CD4-positive, alpha-beta memory T cell (primary cell): ENCODE measurements at regions of chr15 and their contacts with region 1.

Region 1: DNA sequence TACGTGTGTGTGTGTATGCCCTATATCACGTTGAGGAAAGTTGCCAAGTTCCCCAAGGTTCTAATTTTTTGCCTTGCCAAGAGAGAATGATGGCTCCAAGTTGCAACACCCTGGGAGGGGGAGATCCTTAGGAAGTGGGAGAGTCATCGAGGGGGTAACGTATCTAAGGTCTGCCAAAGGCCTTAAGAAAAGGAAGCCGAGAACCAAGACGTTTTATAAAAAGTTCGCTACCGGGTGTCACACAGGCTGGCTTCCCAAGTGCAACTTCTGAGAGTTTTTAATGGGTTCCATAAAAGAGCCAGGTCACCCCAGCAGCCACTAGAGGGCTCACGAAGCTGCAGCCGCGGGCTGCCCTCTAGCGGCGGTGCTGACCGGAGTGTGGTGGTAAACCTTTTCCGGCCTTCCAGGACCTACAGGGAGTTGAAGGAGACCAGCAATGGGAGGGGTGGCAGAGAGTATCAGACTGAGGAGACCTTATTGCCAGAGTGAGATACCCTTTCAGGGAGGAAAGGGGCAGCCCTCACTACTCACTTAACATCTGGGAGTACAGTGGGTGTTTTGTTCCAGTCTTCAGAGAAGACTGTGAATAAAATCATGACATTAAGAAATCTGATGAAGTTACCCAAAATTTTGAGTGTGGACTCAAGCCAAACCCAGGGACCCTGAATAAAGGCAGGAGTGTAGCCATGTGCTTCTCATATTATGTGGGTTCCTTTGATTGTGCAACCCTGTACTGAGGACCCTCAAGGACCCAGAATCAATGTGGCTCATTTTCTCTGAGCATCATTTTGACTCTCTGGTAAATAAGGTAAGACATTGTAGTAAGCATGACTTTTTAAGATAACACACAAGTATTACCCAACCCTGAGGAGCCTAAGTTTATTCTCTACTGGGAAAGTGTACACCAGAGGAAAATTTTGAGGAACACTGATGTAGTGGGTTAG is 2.5 kb upstream of the RFX7 start:
- DNase-seq: peak; percentile 82 to 85 (median 84)
- H3K4me3 ChIP-seq: peak overlapping the region; percentile 19 to 81
- H3K4me3 Mint-ChIP-seq: peak overlapping the region; percentile 84 to 97 (median 90)
- H3K27ac ChIP-seq: peak overlapping the region; percentile 53
- H3K27ac Mint-ChIP-seq: peak overlapping the region; percentile 88 to 97 (median 92)
- H3K4me1 ChIP-seq: peaks cover 35% of the 10 kb centered on the region
- H3K4me1 Mint-ChIP-seq: peaks cover 22 to 39% (median 31%) of the 10 kb centered on the region in 4 donors
- H3K27me3 ChIP-seq: no peaks in the 10 kb centered on the region
- H3K27me3 Mint-ChIP-seq: peaks cover 0 to 2% of the 10 kb centered on the region in 2 donors

Region 2: DNA sequence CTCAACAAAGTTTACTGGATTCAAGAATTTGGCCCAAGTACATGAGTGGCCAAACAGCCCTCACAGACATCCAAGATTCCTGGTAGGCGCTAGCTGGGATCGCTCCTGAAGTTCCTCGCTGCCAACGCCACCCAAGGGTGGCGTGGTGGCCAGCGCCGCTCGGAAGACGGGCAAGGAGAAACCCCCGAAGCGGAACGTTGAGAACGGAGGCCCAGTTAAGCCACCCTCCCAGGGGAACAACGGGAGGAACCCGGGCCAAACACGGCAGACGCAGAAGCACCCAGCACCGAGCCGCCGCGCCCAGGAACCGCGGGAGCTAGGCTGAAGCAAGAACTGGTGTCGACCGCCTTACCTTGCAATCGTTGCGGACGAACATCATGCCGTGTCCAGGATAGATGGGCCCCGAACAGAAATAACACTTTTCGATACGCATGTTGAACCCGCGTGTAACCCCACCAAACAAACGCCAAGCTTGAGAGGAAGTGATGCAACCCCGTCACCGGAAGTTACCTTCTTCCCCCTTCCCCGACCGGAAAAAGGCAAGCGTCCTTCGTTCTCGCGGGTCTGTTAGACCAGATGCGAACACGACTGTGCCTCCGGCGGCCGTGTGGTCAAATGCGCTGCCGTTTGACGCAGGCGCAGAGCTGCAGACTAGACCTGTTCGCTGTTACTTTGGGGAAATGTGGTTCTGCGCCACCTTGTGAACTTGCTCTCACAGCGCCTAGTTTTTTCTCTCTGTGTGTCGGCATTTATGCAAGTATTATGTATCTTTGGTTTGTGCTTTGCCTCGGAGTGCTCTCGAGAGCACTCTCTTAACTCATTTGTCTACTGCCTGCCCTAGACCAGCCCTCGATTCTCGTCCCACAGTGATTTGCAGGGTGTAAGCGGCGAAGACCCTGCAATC is 1049.4 kb before region 1 on chr15 and contains the start of gene RSL24D1:
- CTCF ChIA-PET with region 1: no interaction called
- POLR2A ChIA-PET with region 1: interaction called, 6 read pairs
- intact Hi-C with region 1: loop called (anchors 2 kb)
- DNase-seq: peak; percentile 94 to 98 (median 97)
- H3K4me3 ChIP-seq: peak within 1 kb of the TSS; percentile 90 to 97
- H3K4me3 Mint-ChIP-seq: no peak within 1 kb of the TSS
- H3K27ac ChIP-seq: peak within 1 kb of the TSS; percentile 87
- H3K27ac Mint-ChIP-seq: no peak within 1 kb of the TSS
- H3K4me1 ChIP-seq: peaks cover 40% of the 10 kb centered on the region
- H3K4me1 Mint-ChIP-seq: peaks cover 10 to 17% (median 13%) of the 10 kb centered on the region in 4 donors
- H3K27me3 ChIP-seq: no peaks in the 10 kb centered on the region
- H3K27me3 Mint-ChIP-seq: no peaks in the 10 kb centered on the region
- total RNA-seq, gene RSL24D1: 103 to 107 TPM

Region 3: DNA sequence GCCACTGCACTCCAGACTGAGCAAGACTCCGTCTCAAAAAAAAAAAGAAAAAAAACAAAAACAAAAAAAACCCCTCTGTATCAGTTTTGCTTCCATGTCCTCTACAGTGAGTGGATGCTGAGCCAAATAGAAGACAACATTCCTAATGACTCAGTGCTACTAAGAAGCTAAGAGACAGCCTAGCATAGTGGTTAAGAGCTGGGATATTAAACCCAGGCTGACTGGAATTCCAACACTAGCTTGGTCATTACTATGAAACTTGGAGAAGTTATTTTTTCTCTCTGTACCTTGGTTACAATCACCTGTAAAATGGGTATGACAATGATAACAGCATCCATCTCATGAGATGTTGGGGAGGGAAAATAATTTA is 597.1 kb before region 1 on chr15:
- CTCF ChIA-PET with region 1: interaction called, 7 read pairs
- POLR2A ChIA-PET with region 1: no interaction called
- intact Hi-C with region 1: loop called (anchors 1 kb)
- DNase-seq: no peak
- H3K4me3 ChIP-seq: no peak overlapping the region
- H3K4me3 Mint-ChIP-seq: no peak overlapping the region
- H3K27ac ChIP-seq: no peak overlapping the region
- H3K27ac Mint-ChIP-seq: no peak overlapping the region
- H3K4me1 ChIP-seq: no peaks in the 10 kb centered on the region
- H3K4me1 Mint-ChIP-seq: no peaks in the 10 kb centered on the region
- H3K27me3 ChIP-seq: no peaks in the 10 kb centered on the region
- H3K27me3 Mint-ChIP-seq: no peaks in the 10 kb centered on the region

Region 4: DNA sequence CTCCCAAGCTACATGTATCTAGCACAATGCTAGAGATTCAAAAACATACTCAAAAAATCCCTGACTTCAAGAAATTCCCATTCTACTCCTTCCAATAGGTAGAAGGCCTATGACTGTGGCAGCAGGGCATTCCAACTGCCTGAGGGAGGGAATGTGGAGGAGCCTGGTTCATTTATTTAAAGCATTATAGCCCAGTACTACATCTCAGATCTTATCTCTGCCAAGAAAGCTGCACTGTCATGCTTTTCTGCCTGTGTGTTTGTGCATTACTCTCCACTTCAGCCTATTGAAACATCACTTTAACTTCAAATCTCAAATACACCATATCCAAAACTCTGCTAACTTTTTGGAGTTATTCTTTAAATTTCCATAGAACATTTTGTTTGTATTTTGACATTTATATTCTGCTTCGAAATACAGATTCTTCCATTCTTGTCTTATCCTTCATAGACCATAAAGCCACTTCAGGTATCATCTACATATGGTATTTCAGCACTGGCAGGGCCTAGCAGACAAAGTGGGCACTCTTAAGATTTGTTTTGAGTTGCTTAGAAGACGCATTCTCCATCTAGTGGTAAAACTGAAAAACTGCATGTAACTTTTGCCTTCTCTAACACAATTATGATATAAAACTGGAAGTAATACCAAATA is 193.6 kb before region 1 on chr15:
- CTCF ChIA-PET with region 1: interaction called, 19 read pairs
- POLR2A ChIA-PET with region 1: interaction called, 3 read pairs
- intact Hi-C with region 1: loop called (anchors 2 kb)
- DNase-seq: peak in 4 of 5 donors; percentile 44 to 59 (median 47)
- H3K4me3 ChIP-seq: no peak overlapping the region
- H3K4me3 Mint-ChIP-seq: no peak overlapping the region
- H3K27ac ChIP-seq: no peak overlapping the region
- H3K27ac Mint-ChIP-seq: peak overlapping the region in 2 of 7 donors; percentile 31 to 36
- H3K4me1 ChIP-seq: no peaks in the 10 kb centered on the region
- H3K4me1 Mint-ChIP-seq: peaks cover 0 to 5% (median 3%) of the 10 kb centered on the region in 4 donors
- H3K27me3 ChIP-seq: no peaks in the 10 kb centered on the region
- H3K27me3 Mint-ChIP-seq: no peaks in the 10 kb centered on the region

Region 5: DNA sequence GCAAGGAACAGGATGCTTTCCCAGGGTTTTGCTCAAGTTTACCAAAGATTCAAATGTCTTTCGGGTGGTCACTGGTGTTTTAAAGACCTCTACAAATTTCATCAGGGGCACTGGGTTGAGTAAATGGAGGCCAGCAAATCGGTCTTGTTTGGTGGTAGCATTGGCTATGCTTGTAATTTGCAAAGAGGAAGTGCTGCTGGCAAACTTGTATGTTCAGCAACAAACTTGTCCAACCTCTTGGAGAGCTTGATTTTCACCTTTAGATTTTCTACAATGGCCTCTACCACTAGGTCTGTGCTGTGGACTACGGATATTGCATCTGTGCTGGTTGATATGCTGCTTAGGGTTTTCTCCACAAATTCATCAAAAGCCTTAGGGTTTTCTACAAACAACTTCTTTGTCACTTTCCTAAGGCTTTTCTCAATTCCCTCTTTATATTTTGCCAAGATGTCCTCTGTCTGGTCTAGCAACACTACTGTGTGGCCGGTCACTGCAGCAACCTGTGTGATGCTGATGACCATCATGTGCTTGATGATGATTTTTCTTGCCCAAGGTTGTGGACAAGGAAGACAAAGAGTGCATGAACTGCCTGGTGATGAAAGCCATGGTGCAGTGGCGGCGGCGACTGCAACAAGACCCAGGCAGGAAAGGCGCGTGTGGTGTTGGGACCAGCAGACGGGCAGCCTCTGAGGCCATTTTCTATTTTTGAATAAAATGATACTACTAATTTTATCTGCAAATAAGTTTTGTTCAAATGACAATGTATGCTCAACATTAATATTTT is 53.3 kb before region 1 on chr15:
- CTCF ChIA-PET with region 1: no interaction called
- POLR2A ChIA-PET with region 1: interaction called, 5 read pairs
- intact Hi-C with region 1: loop called (anchors 5 kb)
- DNase-seq: no peak
- H3K4me3 ChIP-seq: no peak overlapping the region
- H3K4me3 Mint-ChIP-seq: no peak overlapping the region
- H3K27ac ChIP-seq: no peak overlapping the region
- H3K27ac Mint-ChIP-seq: peak overlapping the region in 1 of 7 donors; percentile 48
- H3K4me1 ChIP-seq: peaks cover 10% of the 10 kb centered on the region
- H3K4me1 Mint-ChIP-seq: peaks cover 27 to 47% (median 39%) of the 10 kb centered on the region in 4 donors
- H3K27me3 ChIP-seq: no peaks in the 10 kb centered on the region
- H3K27me3 Mint-ChIP-seq: no peaks in the 10 kb centered on the region

Region 6: DNA sequence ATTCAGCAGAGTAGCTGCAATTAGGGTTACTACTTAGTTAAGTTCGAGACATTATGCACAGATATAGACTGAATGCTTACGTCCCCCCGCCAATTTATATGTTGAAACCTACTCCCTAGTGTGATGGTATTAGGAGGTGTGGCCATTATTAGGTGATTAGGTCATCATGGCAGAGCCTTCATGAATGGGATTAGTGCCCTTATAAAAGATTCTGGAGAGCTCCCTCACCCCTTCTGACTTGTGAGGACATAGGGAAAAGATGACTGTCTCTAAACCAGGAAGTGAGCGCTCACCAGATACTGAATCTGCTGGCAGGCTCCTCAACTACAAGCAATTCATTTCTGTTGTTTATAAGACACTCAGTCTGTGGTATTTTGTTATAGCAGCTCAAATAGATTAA is 93.5 kb after region 1 on chr15:
- CTCF ChIA-PET with region 1: no interaction called
- POLR2A ChIA-PET with region 1: no interaction called
- intact Hi-C with region 1: no loop called
- DNase-seq: no peak
- H3K4me3 ChIP-seq: no peak overlapping the region
- H3K4me3 Mint-ChIP-seq: no peak overlapping the region
- H3K27ac ChIP-seq: no peak overlapping the region
- H3K27ac Mint-ChIP-seq: no peak overlapping the region
- H3K4me1 ChIP-seq: no peaks in the 10 kb centered on the region
- H3K4me1 Mint-ChIP-seq: no peaks in the 10 kb centered on the region
- H3K27me3 ChIP-seq: no peaks in the 10 kb centered on the region
- H3K27me3 Mint-ChIP-seq: peaks cover 1 to 8% of the 10 kb centered on the region in 2 donors

Region 7: DNA sequence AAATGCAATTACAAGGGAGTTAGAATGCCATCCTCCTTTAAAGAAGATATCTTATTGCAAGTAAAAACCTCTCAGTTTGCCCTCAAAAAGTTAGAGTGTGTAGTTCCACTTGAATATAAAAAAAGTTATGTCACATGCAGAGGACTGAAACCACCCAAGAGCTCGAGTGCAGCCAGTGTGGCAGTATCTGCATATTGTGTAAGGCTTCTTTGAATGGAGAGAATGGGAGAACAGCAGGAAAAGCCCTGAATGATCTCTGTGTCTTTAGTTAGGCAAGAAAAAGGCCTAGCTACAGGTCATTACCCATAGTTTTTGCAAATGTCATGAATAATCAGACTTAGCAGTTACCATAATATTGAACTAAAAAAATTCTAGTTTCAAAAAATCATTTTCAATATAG is 105.2 kb after region 1 on chr15:
- CTCF ChIA-PET with region 1: no interaction called
- POLR2A ChIA-PET with region 1: no interaction called
- intact Hi-C with region 1: no loop called
- DNase-seq: no peak
- H3K4me3 ChIP-seq: no peak overlapping the region
- H3K4me3 Mint-ChIP-seq: no peak overlapping the region
- H3K27ac ChIP-seq: no peak overlapping the region
- H3K27ac Mint-ChIP-seq: no peak overlapping the region
- H3K4me1 ChIP-seq: no peaks in the 10 kb centered on the region
- H3K4me1 Mint-ChIP-seq: no peaks in the 10 kb centered on the region
- H3K27me3 ChIP-seq: no peaks in the 10 kb centered on the region
- H3K27me3 Mint-ChIP-seq: no peaks in the 10 kb centered on the region

Region 8: DNA sequence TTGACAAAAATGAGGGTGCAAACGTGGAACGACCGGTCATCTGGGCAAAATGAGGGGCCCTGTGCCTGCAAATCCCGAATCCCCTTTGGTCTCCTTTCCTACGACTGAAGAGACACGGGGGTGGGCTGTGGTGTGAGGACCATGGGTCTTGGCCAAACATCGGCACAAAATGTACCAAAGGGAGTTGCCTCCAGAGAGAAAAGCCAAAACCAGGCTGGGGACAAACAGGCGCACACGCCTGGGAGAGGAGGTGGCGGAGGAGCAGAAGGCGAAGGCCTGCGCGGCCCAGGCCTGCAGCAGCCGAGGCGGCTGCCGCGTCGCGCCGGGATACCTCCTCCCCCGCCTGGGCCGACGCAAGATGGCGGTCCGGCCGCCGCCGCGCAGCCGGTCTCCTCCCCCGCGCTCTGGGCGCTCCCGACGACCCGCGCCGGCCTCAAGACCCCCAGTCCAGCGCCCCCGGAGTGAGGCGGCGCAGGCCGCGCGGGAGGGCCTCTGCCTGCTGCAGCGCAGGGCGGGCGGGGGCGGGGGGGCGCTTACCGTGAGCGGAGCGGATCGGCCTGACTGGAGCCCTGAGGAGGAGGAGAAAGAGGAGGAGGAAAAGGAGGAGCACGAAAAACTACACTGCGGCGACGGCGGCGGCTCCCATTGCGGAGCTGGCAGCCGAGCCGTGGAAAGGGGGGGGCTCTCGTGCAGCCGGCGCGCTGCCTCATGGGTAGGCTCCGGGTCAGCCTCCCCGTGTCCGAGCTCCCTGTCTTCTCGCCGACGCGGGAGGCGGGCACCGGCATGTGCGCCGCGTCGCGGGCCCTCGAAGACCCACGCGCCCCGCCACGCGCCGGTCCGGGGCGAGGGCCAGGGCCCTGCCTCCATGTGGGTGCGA is 487.0 kb after region 1 on chr15 and contains the start of gene ZNF280D:
- CTCF ChIA-PET with region 1: no interaction called
- POLR2A ChIA-PET with region 1: interaction called, 3 read pairs
- intact Hi-C with region 1: loop called (anchors 10 kb)
- DNase-seq: peak; percentile 78 to 85 (median 82)
- H3K4me3 ChIP-seq: peak within 1 kb of the TSS; percentile 54 to 69
- H3K4me3 Mint-ChIP-seq: peak within 1 kb of the TSS; percentile 92 to 98 (median 96)
- H3K27ac ChIP-seq: peak within 1 kb of the TSS; percentile 73
- H3K27ac Mint-ChIP-seq: peak within 1 kb of the TSS; percentile 93 to 98 (median 96)
- H3K4me1 ChIP-seq: peaks cover 40% of the 10 kb centered on the region
- H3K4me1 Mint-ChIP-seq: peaks cover 28 to 44% (median 38%) of the 10 kb centered on the region in 4 donors
- H3K27me3 ChIP-seq: no peaks in the 10 kb centered on the region
- H3K27me3 Mint-ChIP-seq: no peaks in the 10 kb centered on the region
- total RNA-seq, gene ZNF280D: 44.5 to 50.1 TPM